Activated CD4-positive, alpha-beta memory T cell treated with anti-CD3 and anti-CD28 coated beads for 36 hours (primary cell): ENCODE measurements at regions of chr3 and their contacts with region 1.

Region 1: DNA sequence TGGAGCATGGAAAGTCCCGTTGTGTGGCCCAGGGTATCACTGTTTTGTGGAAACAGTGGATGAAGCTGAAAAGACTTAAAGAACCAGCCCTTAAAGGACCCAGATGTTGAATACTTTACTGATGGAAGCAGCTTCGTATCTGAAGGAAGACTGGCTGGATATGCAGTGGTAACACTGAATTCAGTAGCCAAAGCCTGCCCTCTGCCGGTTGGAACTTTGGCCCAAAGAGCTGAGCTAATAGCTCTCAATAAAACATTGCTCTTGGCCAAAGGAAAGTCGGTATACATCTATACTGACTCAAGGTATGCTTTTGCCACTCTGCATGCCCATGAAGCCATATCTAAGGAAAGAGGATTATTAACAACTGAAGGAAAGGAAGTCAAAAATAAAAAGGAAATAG is 885.4 kb downstream of the PDCD6IP start:
- DNase-seq: peak; percentile 47
- H3K4me3 Mint-ChIP-seq: no peak overlapping the region
- H3K27ac Mint-ChIP-seq: no peak overlapping the region
- H3K4me1 Mint-ChIP-seq: no peaks in the 10 kb centered on the region
- H3K27me3 Mint-ChIP-seq: no peaks in the 10 kb centered on the region

Region 2: DNA sequence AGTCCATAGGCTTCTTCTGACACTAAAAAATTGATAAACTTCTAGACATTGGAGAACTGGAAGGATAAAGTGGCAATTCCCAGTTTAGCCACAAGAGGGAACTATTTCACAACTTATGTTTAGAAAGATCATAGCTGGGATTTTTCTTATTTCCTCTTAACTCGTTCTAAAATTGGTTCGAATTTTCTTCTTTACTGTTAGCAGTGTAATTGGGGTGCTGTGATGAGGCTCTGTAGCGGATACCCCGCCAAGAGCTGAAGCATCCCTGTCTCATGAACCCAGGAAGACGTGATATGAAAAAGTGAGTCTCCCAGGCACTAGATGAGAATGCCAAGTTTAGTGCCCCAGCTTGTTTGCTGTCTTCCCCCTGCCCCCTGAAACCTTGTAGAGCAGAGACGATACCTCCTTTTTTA is 800.3 kb before region 1 on chr3:
- CTCF ChIA-PET with region 1: interaction called, 31 read pairs
- POLR2A ChIA-PET with region 1: no interaction called
- intact Hi-C with region 1: loop called (anchors 1 kb)
- DNase-seq: no peak
- H3K4me3 Mint-ChIP-seq: no peak overlapping the region
- H3K27ac Mint-ChIP-seq: no peak overlapping the region
- H3K4me1 Mint-ChIP-seq: peaks cover 4% of the 10 kb centered on the region
- H3K27me3 Mint-ChIP-seq: no peaks in the 10 kb centered on the region

Region 3: GRCh38 chr3:33954956-33955355 is 728.9 kb before region 1 on chr3:
- CTCF ChIA-PET with region 1: no interaction called
- POLR2A ChIA-PET with region 1: no interaction called
- intact Hi-C with region 1: loop called (anchors 5 kb)
- DNase-seq: no peak
- H3K4me3 Mint-ChIP-seq: no peak overlapping the region
- H3K27ac Mint-ChIP-seq: no peak overlapping the region
- H3K4me1 Mint-ChIP-seq: no peaks in the 10 kb centered on the region
- H3K27me3 Mint-ChIP-seq: no peaks in the 10 kb centered on the region